ENCODE measurements at regions of chr3 and their contacts with region 1.

Region 1: DNA sequence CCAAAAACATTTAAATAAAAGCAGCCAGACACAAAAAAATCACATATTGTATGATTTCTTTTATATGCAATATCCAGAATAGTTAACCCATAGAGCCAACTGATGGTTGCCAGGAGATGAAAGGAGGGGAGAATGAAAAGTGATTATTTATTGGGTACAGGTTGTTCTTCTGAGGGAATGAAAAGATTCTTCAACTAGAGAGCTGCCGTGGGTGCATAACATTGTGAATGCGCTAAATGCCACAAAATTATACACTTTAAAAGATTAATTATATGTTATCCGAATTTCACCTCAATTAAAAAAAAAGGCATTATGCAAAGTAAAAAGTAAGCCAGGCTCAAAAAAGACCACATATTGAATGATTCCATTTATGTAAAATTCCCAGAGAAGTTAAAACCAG is 36.1 kb downstream of the PRKAR2A start:
- DNase-seq: no peak
- H3K4me3 Mint-ChIP-seq: no peak overlapping the region
- H3K27ac Mint-ChIP-seq: peak overlapping the region; percentile 92
- H3K4me1 Mint-ChIP-seq: peaks cover 30% of the 10 kb centered on the region
- H3K27me3 Mint-ChIP-seq: no peaks in the 10 kb centered on the region

Region 2: DNA sequence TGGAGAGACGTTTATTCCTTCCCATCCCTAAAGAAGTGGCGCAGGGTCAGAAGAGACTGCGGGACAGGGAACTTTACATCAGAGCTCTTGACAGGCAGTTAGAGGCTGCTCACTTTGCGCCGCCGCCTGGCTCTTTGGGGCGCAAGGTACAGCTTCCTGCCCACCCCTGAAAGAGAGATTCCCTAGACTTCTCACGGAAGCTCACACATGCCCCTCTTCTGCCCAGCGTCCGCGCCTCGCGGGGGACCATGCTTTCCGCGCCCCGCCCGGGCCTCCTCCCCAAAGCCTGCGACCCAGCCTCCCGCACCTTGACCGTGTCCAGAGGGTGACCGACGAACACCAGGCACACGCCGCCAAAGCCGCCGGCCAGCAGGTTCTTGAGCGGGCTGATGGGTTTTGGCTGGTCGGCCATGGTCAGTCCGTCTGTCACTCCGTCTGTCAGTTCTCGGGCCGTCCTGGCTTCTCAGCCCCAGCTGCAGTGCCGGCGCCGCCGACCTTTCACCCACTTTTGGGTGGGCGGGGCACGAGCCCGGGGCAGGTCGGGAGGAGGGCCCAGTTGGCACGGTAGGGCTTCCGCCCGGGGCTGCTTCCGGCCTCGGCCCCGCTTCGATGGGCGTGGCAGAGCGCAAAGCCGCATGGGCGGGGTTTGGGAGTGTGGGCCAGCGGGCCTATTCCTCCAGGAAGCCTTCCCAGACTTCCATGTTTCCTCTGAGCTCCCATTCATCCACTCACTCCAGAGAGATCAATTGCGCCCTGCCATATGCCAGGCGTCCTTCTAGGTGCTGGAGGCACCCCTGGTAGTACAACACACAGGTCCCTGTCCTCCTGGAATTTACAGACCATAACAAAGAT is 87.1 kb after region 1 on chr3 and contains the start of gene SLC25A20:
- CTCF ChIA-PET with region 1: no interaction called
- POLR2A ChIA-PET with region 1: no interaction called
- DNase-seq: peak; percentile 94
- H3K4me3 Mint-ChIP-seq: peak within 1 kb of the TSS; percentile 97
- H3K27ac Mint-ChIP-seq: peak within 1 kb of the TSS; percentile 97
- H3K4me1 Mint-ChIP-seq: peaks cover 55% of the 10 kb centered on the region
- H3K27me3 Mint-ChIP-seq: no peaks in the 10 kb centered on the region
- total RNA-seq, gene SLC25A20: 35.2 to 40.6 TPM

Region 3: DNA sequence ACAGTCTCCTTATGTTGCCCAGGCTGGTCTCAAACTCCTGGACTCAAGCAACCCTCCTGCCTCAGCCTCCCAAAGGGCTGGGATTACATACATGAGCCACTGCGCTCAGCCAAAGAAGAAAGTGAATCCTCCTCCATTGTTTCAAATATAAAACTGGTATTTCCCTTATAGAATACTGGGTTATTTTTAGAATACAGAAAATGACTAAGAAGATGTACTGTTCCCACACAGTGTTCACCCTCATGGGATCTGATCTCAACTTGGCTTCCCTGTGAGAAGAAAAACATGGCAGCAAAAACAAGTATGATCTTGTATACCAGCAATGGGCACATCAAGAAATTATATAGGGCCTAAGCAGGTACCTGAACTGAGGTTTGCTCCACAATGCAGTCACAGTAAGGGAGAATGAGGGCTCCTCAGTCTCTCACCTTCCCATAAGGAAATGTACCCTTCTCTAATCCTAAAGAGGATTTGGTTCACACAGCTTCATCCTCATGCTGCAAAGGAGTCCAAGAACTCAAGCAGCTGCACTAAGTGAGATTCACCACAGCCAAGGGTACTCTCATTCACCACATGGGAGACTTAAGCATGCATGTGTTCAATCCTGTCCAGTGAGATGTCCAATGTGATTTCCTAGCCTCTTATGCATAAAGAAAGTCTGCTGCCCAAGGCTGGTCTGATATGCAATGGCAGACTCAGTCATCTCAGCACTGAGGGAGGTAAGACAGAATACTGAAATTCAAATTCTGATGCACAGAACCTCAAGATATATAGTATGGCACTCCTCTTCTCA is 502.6 kb after region 1 on chr3:
- CTCF ChIA-PET with region 1: no interaction called
- POLR2A ChIA-PET with region 1: interaction called, 15 read pairs
- DNase-seq: no peak
- H3K4me3 Mint-ChIP-seq: no peak overlapping the region
- H3K27ac Mint-ChIP-seq: no peak overlapping the region
- H3K4me1 Mint-ChIP-seq: no peaks in the 10 kb centered on the region
- H3K27me3 Mint-ChIP-seq: no peaks in the 10 kb centered on the region

Measured in activated CD4-positive, alpha-beta T cell treated with anti-CD3 and anti-CD28 coated beads, Interleukin-2, amount 10 ng/mL, durations not matched to agents 7 days and 5 days (primary cell).